A549 (cell line): ENCODE measurements at regions of chr12 and their contacts with region 1.

Region 1: DNA sequence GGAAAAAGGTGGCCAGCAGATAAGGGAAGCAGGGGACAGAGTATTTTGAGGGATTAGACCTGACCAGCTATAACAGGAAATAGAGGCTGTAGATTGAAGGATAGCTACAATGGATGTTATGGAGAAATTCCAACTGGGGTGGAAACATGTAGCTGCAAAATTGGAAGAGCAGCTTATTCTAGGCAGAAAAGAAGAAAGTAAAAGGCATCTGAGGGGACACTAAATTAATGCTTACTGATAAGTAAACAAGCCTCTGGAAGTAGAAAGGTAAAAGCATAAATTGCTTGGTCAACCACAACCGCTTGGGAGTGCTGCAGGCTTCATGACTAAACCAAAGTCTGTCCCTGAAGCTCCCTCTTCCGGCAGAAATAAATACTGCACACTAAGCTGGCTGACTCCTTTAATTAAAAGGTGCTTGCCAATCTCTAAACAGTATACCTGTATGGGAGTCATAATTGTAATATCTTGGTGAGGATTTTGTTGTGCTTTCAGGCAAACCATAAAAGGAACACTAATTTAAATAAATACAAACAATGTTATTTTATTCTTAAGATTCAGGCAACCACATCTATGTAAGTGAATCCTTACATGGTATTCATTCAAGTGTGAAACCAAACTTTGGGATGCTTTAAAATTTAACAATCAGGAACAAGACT is 7.7 kb downstream of the UBC start:
- DNase-seq: peak; percentile 82 to 96
- ATAC-seq: peak; percentile 16 to 34; a peak in 3 of 6 replicates
- H3K4me3 ChIP-seq: no peak overlapping the region
- H3K27ac ChIP-seq: peak overlapping the region; percentile 72 to 85
- H3K4me1 ChIP-seq: peaks cover 75% of the 10 kb centered on the region
- CTCF ChIP-seq: peak; percentile 100
- EP300 ChIP-seq: no peak
- POLR2A ChIP-seq: no peak
- RAD21 ChIP-seq: peak; percentile 98

Region 2: DNA sequence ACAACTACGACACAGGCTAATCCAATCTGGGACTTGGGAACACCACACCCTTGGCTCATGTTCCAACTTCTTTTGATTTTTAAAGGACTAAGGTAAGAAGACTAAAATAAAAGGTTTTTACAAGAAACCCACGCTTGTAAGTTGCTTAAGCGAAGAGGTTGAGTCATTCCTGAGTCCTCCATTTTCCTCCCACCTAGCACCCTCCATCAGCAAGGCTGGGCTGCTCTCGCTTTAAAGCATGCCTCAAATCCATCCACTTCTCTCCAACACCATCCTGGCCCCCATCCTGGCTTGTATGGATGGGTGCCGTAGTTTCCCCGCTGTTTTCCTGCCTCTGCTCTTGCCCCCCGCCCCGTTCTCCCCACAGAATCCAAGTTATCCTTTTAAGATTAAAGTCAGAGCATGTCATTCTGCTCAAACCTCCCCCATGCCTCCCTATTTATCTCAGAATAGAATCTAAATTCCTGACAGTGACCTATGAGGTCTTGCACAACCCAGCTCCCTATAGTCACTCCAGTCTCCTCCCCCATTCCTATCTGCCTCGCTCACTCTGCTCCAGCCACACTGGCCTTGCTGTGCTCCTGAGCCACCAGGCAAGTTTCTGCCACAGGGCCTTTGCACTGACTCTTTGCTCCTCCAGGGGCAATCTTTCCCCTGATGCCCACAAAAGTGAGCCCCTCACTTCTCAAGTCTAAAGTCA is 77.6 kb before region 1 on chr12:
- CTCF ChIA-PET with region 1: interaction called, 14 read pairs
- POLR2A ChIA-PET with region 1: interaction called, 3 read pairs
- DNase-seq: peak; percentile 84 to 95
- ATAC-seq: peak; percentile 78 to 82
- H3K4me3 ChIP-seq: peak overlapping the region; percentile 14; the same call in 2 of the 3 replicates
- H3K27ac ChIP-seq: peak overlapping the region; percentile 96
- H3K4me1 ChIP-seq: peaks cover 62% of the 10 kb centered on the region
- CTCF ChIP-seq: no peak
- EP300 ChIP-seq: peak; percentile 47 to 72; a peak in 3 of 5 replicates
- POLR2A ChIP-seq: no peak
- RAD21 ChIP-seq: peak in 1 of 2 experiments; percentile 37; a peak in 2 of 5 replicates

Region 3: GRCh38 chr12:124896461-124896860 is 10.3 kb before region 1 on chr12:
- CTCF ChIA-PET with region 1: interaction called, 10 read pairs
- POLR2A ChIA-PET with region 1: interaction called, 5 read pairs
- DNase-seq: no peak
- ATAC-seq: no peak
- H3K4me3 ChIP-seq: no peak overlapping the region
- H3K27ac ChIP-seq: peak overlapping the region in 1 of 2 experiments; percentile 53; a peak in 3 of 6 replicates
- H3K4me1 ChIP-seq: peaks cover 42% of the 10 kb centered on the region
- CTCF ChIP-seq: no peak
- EP300 ChIP-seq: no peak
- POLR2A ChIP-seq: no peak
- RAD21 ChIP-seq: no peak

Region 4: DNA sequence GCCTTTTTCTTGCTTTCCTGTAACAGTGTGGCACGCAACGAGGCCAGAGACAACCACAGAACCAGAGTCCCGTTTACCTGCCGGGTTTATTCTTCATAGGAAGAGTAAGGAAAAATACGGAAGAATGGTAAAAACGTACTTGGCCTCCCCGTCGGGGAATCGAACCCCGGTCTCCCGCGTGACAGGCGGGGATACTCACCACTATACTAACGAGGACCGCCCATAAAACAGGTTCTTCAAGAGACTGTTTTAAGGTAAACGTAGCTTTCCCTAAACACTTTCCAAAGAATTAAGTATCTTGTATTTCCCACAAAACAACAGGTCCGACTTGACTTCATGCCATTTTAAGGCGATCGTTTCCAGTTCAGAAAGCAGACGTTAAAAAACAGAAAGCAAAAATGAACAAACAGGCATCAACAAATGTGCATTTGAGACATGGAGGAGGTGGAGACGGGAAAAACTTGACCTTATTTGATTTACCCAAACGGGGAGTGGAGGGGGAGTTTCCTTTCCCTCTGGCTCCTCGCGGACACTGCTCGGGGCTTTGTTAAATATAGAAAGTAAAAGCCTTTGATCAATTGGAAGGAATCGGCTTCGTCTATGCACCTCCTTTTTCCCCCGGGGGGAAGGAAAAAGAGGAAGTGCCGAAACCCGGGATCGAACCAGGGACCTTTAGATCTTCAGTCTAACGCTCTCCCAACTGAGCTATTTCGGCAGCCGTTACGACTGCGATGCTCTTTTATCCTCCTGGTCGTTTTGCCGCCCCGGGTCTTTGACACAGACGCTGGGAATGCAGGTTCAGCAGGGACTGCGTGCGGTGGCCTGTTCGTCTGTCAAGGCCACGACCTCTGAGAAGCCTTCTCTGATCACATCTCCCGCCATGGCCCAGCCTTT is 20.7 kb after region 1 on chr12:
- CTCF ChIA-PET with region 1: interaction called, 207 read pairs
- POLR2A ChIA-PET with region 1: interaction called, 12 read pairs
- DNase-seq: peak; percentile 81 to 95
- ATAC-seq: peak; percentile 76 to 77
- H3K4me3 ChIP-seq: peak overlapping the region; percentile 59
- H3K27ac ChIP-seq: peak overlapping the region; percentile 97 to 98
- H3K4me1 ChIP-seq: peaks cover 34% of the 10 kb centered on the region
- CTCF ChIP-seq: no peak
- EP300 ChIP-seq: no peak
- POLR2A ChIP-seq: no peak
- RAD21 ChIP-seq: no peak